ENCODE measurements at regions of chr9 and their contacts with region 1.

Region 1: GRCh38 chr9:108282872-108283271 is 572.9 kb downstream of the ACTL7B start:
- DNase-seq: peak in 2 of 3 donors; percentile 20 to 21
- H3K4me3 ChIP-seq: no peak overlapping the region
- H3K27ac ChIP-seq: no peak overlapping the region
- H3K4me1 ChIP-seq: no peaks in the 10 kb centered on the region
- H3K27me3 ChIP-seq: no peaks in the 10 kb centered on the region

Region 2: GRCh38 chr9:108257382-108257781 is 25.5 kb before region 1 on chr9:
- CTCF ChIA-PET with region 1: no interaction called
- POLR2A ChIA-PET with region 1: no interaction called
- DNase-seq: no peak
- H3K4me3 ChIP-seq: no peak overlapping the region
- H3K27ac ChIP-seq: no peak overlapping the region
- H3K4me1 ChIP-seq: no peaks in the 10 kb centered on the region
- H3K27me3 ChIP-seq: no peaks in the 10 kb centered on the region

Region 3: GRCh38 chr9:108272349-108272899 is 10.4 kb before region 1 on chr9:
- CTCF ChIA-PET with region 1: interaction called, 23 read pairs
- POLR2A ChIA-PET with region 1: no interaction called
- DNase-seq: peak; percentile 40 to 50 (median 50)
- H3K4me3 ChIP-seq: peak overlapping the region in 3 of 7 experiments; percentile 9 to 58 (median 58)
- H3K27ac ChIP-seq: no peak overlapping the region
- H3K4me1 ChIP-seq: peaks cover 5 to 29% (median 15%) of the 10 kb centered on the region in 4 experiments
- H3K27me3 ChIP-seq: no peaks in the 10 kb centered on the region

Region 4: GRCh38 chr9:108443741-108444140 is 160.9 kb after region 1 on chr9:
- CTCF ChIA-PET with region 1: no interaction called
- POLR2A ChIA-PET with region 1: no interaction called
- DNase-seq: no peak
- H3K4me3 ChIP-seq: no peak overlapping the region
- H3K27ac ChIP-seq: no peak overlapping the region
- H3K4me1 ChIP-seq: no peaks in the 10 kb centered on the region
- H3K27me3 ChIP-seq: no peaks in the 10 kb centered on the region

Measured in common myeloid progenitor, CD34-positive (primary cell).